WTC11 (cell line): ENCODE measurements at regions of chrX and their contacts with region 1.

Region 1: GRCh38 chrX:47807548-47807947 is 29.2 kb upstream of the ZNF81 start:
- DNase-seq: peak; percentile 24
- ATAC-seq: peak; percentile 33
- H3K4me3 Mint-ChIP-seq: no peak overlapping the region
- H3K27ac Mint-ChIP-seq: no peak overlapping the region
- H3K4me1 Mint-ChIP-seq: peaks cover 30% of the 10 kb centered on the region
- H3K27me3 Mint-ChIP-seq: peaks cover under 1% of the 10 kb centered on the region; the same call in 1 of the 2 replicates
- CTCF ChIP-seq: no peak

Region 2: DNA sequence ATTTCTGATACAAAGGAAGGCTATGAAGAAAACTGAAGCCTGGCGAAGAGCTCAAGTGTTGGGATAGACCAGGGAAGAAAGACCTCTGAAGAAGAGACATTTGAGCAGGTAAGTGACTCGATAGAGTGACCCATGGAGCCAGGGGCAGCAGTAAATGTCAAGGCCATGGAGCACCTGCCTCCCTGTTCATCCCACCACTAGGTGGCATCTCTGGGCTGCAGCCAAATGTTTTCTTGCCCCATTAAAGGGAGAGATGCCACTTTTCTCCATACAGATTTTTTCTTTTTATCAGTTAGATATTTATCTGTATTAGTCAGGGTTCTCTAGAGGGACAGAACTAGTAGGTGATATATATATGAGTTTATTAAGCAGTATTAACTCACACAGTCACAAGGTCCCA is 24.2 kb after region 1 on chrX:
- CTCF ChIA-PET with region 1: interaction called, 11 read pairs
- POLR2A ChIA-PET with region 1: no interaction called
- DNase-seq: peak; percentile 65
- ATAC-seq: peak; percentile 23; the same call in 1 of the 2 replicates
- H3K4me3 Mint-ChIP-seq: no peak overlapping the region
- H3K27ac Mint-ChIP-seq: no peak overlapping the region
- H3K4me1 Mint-ChIP-seq: peaks cover 13% of the 10 kb centered on the region
- H3K27me3 Mint-ChIP-seq: no peaks in the 10 kb centered on the region; the same call in 1 of the 2 replicates
- CTCF ChIP-seq: peak; percentile 42

Region 3: DNA sequence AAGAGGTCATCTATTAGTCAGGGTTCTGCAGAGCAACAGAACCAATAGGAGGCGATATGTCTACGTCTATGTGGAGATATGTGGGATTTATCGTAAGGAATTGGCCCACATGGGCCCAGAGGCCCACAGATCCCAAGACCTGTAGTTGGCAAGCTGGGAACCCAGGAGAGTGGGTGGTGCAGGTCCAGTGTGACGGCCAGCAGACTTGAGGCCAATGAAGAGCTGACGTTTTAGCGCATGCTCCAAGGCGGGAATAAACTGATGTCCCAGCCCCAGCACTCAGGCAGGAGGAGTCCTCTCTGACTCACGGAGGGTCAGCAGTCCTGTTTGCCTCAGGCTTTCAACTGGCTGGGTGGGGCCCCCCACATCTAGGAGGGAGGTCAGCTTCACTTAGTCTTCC is 220.5 kb after region 1 on chrX:
- CTCF ChIA-PET with region 1: interaction called, 10 read pairs
- POLR2A ChIA-PET with region 1: no interaction called
- DNase-seq: no peak
- ATAC-seq: no peak
- H3K4me3 Mint-ChIP-seq: no peak overlapping the region
- H3K27ac Mint-ChIP-seq: no peak overlapping the region
- H3K4me1 Mint-ChIP-seq: peaks cover 4% of the 10 kb centered on the region; the same call in 1 of the 2 replicates
- H3K27me3 Mint-ChIP-seq: no peaks in the 10 kb centered on the region
- CTCF ChIP-seq: no peak